ENCODE measurements at regions of chr12 and their contacts with region 1.

Region 1: GRCh38 chr12:42023733-42024494 is 120.8 kb downstream of the GXYLT1 start:
- DNase-seq: peak; percentile 47 to 87 (median 66)
- H3K4me3 ChIP-seq: peak overlapping the region in 57 of 59 donors; percentile 25 to 64 (median 51)
- H3K27ac ChIP-seq: peak overlapping the region in 1 of 59 donors; percentile 0
- H3K27me3 ChIP-seq: no peaks in the 10 kb centered on the region
- CTCF ChIP-seq: peak; percentile 86 to 99 (median 97)

Region 2: GRCh38 chr12:41264281-41264680 is 759.6 kb before region 1 on chr12:
- intact Hi-C with region 1: loop called in 1 of 2 experiments (anchors 5 kb)
- DNase-seq: no peak
- H3K4me3 ChIP-seq: no peak overlapping the region
- H3K27ac ChIP-seq: no peak overlapping the region
- H3K27me3 ChIP-seq: no peaks in the 10 kb centered on the region
- CTCF ChIP-seq: peak in 55 of 56 donors; percentile 23 to 76 (median 59)

Region 3: GRCh38 chr12:41277116-41277945 is 746.6 kb before region 1 on chr12:
- intact Hi-C with region 1: loop called (anchors 1 to 2 kb)
- DNase-seq: peak in 4 of 10 donors; percentile 6 to 29 (median 19)
- H3K4me3 ChIP-seq: peak overlapping the region in 58 of 59 donors; percentile 4 to 64 (median 40)
- H3K27ac ChIP-seq: peak overlapping the region in 4 of 59 donors; percentile 1 to 44 (median 20)
- H3K27me3 ChIP-seq: no peaks in the 10 kb centered on the region
- CTCF ChIP-seq: peak; percentile 60 to 97 (median 82)

Region 4: GRCh38 chr12:41684997-41685396 is 338.9 kb before region 1 on chr12:
- intact Hi-C with region 1: loop called in 1 of 2 experiments (anchors 10 kb)
- DNase-seq: no peak
- H3K4me3 ChIP-seq: no peak overlapping the region
- H3K27ac ChIP-seq: no peak overlapping the region
- H3K27me3 ChIP-seq: no peaks in the 10 kb centered on the region
- CTCF ChIP-seq: peak in 15 of 56 donors; percentile 17 to 51 (median 36)

Region 5: GRCh38 chr12:42332301-42333285 is 308.7 kb after region 1 on chr12:
- intact Hi-C with region 1: loop called in 1 of 2 experiments (anchors 5 kb)
- DNase-seq: peak in 2 of 10 donors; percentile 20 to 45
- H3K4me3 ChIP-seq: no peak overlapping the region
- H3K27ac ChIP-seq: no peak overlapping the region
- H3K27me3 ChIP-seq: no peaks in the 10 kb centered on the region
- CTCF ChIP-seq: peak; percentile 51 to 87 (median 72)

Measured in dorsolateral prefrontal cortex (tissue), 120 donors.